ENCODE measurements at regions of chr9 and their contacts with region 1.

Region 1: DNA sequence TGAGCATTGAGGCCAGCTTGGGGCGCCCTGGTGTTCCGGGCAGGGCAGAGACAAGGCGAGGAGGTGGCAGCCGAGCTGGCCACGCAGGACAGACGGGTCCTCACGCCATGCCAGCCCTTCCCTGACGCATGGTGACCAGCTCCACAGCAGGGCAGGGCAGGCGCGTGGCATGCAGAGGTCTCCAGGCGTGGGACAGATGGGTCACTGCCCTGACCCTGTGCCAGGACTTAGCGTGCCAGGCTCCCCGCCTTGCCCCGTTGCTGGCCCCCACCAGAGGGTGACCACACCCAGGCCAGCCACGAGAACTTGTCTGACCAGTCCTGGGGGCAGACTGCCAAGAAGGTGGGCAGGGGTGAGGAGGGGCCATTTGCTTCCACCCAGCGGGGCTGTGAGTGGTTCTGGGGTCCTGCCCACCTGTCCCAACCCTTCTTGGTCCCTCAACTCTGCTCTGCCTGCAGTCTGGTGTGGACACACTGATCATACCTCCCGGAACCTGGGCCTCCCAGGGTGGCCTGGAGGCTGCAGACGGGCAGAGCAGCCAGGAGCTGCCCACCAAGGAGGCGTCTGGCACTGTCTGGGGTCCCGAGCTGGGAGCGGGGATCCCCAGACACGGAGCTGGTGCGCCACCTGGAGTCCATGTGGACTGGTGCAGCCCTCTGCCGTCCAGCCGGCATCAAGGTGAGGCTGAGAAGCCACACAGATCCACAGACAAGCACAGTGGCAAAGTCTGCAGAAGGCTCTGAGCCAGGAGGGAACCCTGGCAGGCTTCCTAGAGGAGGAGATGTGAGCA is at the start of gene RNF224:
- DNase-seq: peak; percentile 60 to 91 (median 80)

Region 2: GRCh38 chr9:137114610-137115391 is 112.5 kb before region 1 on chr9 and contains the start of gene DPP7:
- intact Hi-C with region 1: loop called (anchors 5 kb)
- DNase-seq: peak; percentile 38 to 94 (median 88)